Caco-2 (cell line): ENCODE measurements at regions of chr9 and their contacts with region 1.

Region 1: GRCh38 chr9:35732122-35732799 is at the starts of genes CREB3 and TLN1:
- DNase-seq: peak; percentile 98 to 99
- H3K4me3 ChIP-seq: peak within 1 kb of the TSS; percentile 83
- H3K4me3 Mint-ChIP-seq: no peak within 1 kb of the TSS
- H3K27ac Mint-ChIP-seq: no peak within 1 kb of the TSS
- H3K4me1 ChIP-seq: peaks cover 39% of the 10 kb centered on the region
- H3K4me1 Mint-ChIP-seq: no peaks in the 10 kb centered on the region
- H3K27me3 ChIP-seq: no peaks in the 10 kb centered on the region
- H3K27me3 Mint-ChIP-seq: no peaks in the 10 kb centered on the region
- CTCF ChIP-seq: peak in 1 of 2 experiments; percentile 12
- total RNA-seq, gene CREB3: 50.4 and 54.1 TPM in 2 replicates
- total RNA-seq, gene TLN1: 147 and 165 TPM in 2 replicates

Region 2: GRCh38 chr9:35116898-35117551 is 615.2 kb before region 1 on chr9:
- CTCF ChIA-PET with region 1: no interaction called
- POLR2A ChIA-PET with region 1: no interaction called
- intact Hi-C with region 1: loop called (anchors 10 kb)
- DNase-seq: peak; percentile 90 to 91
- H3K4me3 ChIP-seq: peak overlapping the region; percentile 92
- H3K4me3 Mint-ChIP-seq: peak overlapping the region; percentile 91
- H3K27ac Mint-ChIP-seq: peak overlapping the region; percentile 68
- H3K4me1 ChIP-seq: peaks cover 21% of the 10 kb centered on the region
- H3K4me1 Mint-ChIP-seq: peaks cover 17% of the 10 kb centered on the region
- H3K27me3 ChIP-seq: no peaks in the 10 kb centered on the region
- H3K27me3 Mint-ChIP-seq: no peaks in the 10 kb centered on the region
- CTCF ChIP-seq: peak; percentile 90

Region 3: GRCh38 chr9:35603987-35604577 is 128.2 kb before region 1 on chr9:
- CTCF ChIA-PET with region 1: interaction called, 10 read pairs
- POLR2A ChIA-PET with region 1: interaction called, 10 read pairs
- intact Hi-C with region 1: loop called (anchors 2 kb)
- DNase-seq: peak; percentile 99 to 100
- H3K4me3 ChIP-seq: peak overlapping the region; percentile 92
- H3K4me3 Mint-ChIP-seq: peak overlapping the region; percentile 99
- H3K27ac Mint-ChIP-seq: peak overlapping the region; percentile 99
- H3K4me1 ChIP-seq: peaks cover 16% of the 10 kb centered on the region
- H3K4me1 Mint-ChIP-seq: peaks cover 23% of the 10 kb centered on the region
- H3K27me3 ChIP-seq: no peaks in the 10 kb centered on the region
- H3K27me3 Mint-ChIP-seq: no peaks in the 10 kb centered on the region
- CTCF ChIP-seq: peak; percentile 78 to 83

Region 4: GRCh38 chr9:35657546-35658136 is 74.6 kb before region 1 on chr9 and contains the start of gene RMRP:
- CTCF ChIA-PET with region 1: interaction called, 19 read pairs
- POLR2A ChIA-PET with region 1: interaction called, 32 read pairs
- intact Hi-C with region 1: loop called (anchors 1 kb)
- DNase-seq: peak; percentile 98 to 100
- H3K4me3 ChIP-seq: peak within 1 kb of the TSS; percentile 95
- H3K4me3 Mint-ChIP-seq: peak within 1 kb of the TSS; percentile 76
- H3K27ac Mint-ChIP-seq: peak within 1 kb of the TSS; percentile 82
- H3K4me1 ChIP-seq: 0 out of 2 replicates have a peak, but pooled peaks cover 5% of the 10 kb centered on the region
- H3K4me1 Mint-ChIP-seq: peaks cover 12% of the 10 kb centered on the region
- H3K27me3 ChIP-seq: no peaks in the 10 kb centered on the region
- H3K27me3 Mint-ChIP-seq: peaks cover 3% of the 10 kb centered on the region
- CTCF ChIP-seq: peak; percentile 15 to 21
- total RNA-seq, gene RMRP: 10,161 and 10,726 TPM in 2 replicates

Region 5: GRCh38 chr9:35696525-35697215 is 35.6 kb before region 1 on chr9:
- CTCF ChIA-PET with region 1: interaction called, 33 read pairs
- POLR2A ChIA-PET with region 1: interaction called, 9 read pairs
- intact Hi-C with region 1: loop called (anchors 1 kb)
- DNase-seq: peak; percentile 68 to 76
- H3K4me3 ChIP-seq: no peak overlapping the region
- H3K4me3 Mint-ChIP-seq: no peak overlapping the region
- H3K27ac Mint-ChIP-seq: no peak overlapping the region
- H3K4me1 ChIP-seq: peaks cover 8% of the 10 kb centered on the region
- H3K4me1 Mint-ChIP-seq: no peaks in the 10 kb centered on the region
- H3K27me3 ChIP-seq: no peaks in the 10 kb centered on the region
- H3K27me3 Mint-ChIP-seq: no peaks in the 10 kb centered on the region
- CTCF ChIP-seq: peak; percentile 70 to 90

Region 6: GRCh38 chr9:35756275-35757225 is 24.3 kb after region 1 on chr9:
- CTCF ChIA-PET with region 1: interaction called, 4 read pairs
- POLR2A ChIA-PET with region 1: interaction called, 5 read pairs
- intact Hi-C with region 1: loop called (anchors 1 kb)
- DNase-seq: peak; percentile 72 to 77
- H3K4me3 ChIP-seq: peak overlapping the region; percentile 59
- H3K4me3 Mint-ChIP-seq: peak overlapping the region; percentile 80
- H3K27ac Mint-ChIP-seq: peak overlapping the region; percentile 81
- H3K4me1 ChIP-seq: peaks cover 5% of the 10 kb centered on the region; the same call in 1 of the 2 replicates
- H3K4me1 Mint-ChIP-seq: peaks cover 14% of the 10 kb centered on the region
- H3K27me3 ChIP-seq: no peaks in the 10 kb centered on the region
- H3K27me3 Mint-ChIP-seq: no peaks in the 10 kb centered on the region
- CTCF ChIP-seq: peak; percentile 56 to 76

Region 7: DNA sequence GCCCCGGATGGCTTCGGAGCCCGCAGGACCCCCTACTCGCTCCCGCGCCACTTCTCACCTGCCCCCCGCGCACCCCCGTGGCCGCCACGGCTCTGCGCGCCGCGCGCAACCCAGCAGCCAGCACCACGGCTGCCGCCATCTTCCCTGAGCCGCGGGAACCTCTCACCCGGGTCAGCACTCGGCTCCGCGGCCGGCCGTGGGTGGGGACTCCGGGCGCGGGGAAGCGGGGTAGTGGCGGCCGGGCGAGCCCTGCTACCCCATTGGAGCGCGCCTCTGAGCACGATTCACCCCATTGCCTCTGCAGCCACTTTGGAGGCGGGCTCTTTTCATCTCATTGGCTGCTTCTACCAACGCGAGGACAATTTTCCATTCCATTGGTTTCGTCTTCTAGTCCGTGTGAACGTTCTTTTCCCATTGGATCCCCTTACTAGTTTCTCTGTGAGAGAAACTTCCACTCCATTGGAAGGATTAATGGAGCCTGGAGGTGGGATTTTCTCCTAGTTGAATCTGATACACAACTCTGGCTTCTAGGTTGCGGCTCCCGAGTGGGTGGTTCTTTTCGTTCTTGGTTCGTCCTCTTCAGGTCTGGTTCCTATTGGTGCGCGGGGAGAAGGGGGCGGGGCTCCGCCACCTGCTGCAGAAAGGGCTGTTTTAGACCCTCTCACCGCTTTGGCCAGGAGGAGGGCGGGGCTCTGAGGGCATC is 82.7 kb after region 1 on chr9 and contains the start of gene HINT2:
- CTCF ChIA-PET with region 1: interaction called, 5 read pairs
- POLR2A ChIA-PET with region 1: interaction called, 5 read pairs
- intact Hi-C with region 1: loop called (anchors 1 kb)
- DNase-seq: peak; percentile 98 to 99
- H3K4me3 ChIP-seq: peak within 1 kb of the TSS; percentile 79
- H3K4me3 Mint-ChIP-seq: peak within 1 kb of the TSS; percentile 93
- H3K27ac Mint-ChIP-seq: peak within 1 kb of the TSS; percentile 93
- H3K4me1 ChIP-seq: peaks cover 20% of the 10 kb centered on the region
- H3K4me1 Mint-ChIP-seq: peaks cover 14% of the 10 kb centered on the region
- H3K27me3 ChIP-seq: no peaks in the 10 kb centered on the region
- H3K27me3 Mint-ChIP-seq: no peaks in the 10 kb centered on the region
- CTCF ChIP-seq: no peak
- total RNA-seq, gene HINT2: 88.0 and 110 TPM in 2 replicates

Region 8: GRCh38 chr9:36074870-36075532 is 342.7 kb after region 1 on chr9:
- CTCF ChIA-PET with region 1: no interaction called
- POLR2A ChIA-PET with region 1: no interaction called
- intact Hi-C with region 1: no loop called
- DNase-seq: no peak
- H3K4me3 ChIP-seq: no peak overlapping the region
- H3K4me3 Mint-ChIP-seq: no peak overlapping the region
- H3K27ac Mint-ChIP-seq: no peak overlapping the region
- H3K4me1 ChIP-seq: peaks cover 13% of the 10 kb centered on the region
- H3K4me1 Mint-ChIP-seq: peaks cover 6% of the 10 kb centered on the region
- H3K27me3 ChIP-seq: no peaks in the 10 kb centered on the region
- H3K27me3 Mint-ChIP-seq: no peaks in the 10 kb centered on the region
- CTCF ChIP-seq: no peak